Left colon (tissue), 2 donors: ENCODE measurements at regions of chr18 and their contacts with region 1.

Region 1: DNA sequence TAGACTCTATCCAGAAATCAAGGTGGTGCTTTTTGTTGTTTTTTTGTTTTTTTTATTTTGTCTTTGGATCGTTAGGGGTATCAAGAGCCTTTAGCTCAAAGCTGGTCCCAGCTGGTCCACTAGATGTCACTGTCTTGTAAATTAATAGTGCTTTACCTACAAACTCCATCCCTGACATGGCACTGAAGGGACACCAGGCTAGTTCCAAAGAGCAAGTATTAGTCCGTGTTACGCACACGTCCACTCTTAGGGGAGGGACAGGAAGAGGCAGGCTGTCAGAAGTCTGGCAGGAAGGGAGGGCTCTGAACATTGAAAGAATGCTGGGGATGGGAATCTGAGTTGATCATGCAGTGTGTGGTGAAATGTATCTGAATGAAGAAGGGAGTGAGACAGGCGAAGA is 85.9 kb upstream of the CCBE1 start:
- DNase-seq: no peak
- ATAC-seq: no peak

Region 2: DNA sequence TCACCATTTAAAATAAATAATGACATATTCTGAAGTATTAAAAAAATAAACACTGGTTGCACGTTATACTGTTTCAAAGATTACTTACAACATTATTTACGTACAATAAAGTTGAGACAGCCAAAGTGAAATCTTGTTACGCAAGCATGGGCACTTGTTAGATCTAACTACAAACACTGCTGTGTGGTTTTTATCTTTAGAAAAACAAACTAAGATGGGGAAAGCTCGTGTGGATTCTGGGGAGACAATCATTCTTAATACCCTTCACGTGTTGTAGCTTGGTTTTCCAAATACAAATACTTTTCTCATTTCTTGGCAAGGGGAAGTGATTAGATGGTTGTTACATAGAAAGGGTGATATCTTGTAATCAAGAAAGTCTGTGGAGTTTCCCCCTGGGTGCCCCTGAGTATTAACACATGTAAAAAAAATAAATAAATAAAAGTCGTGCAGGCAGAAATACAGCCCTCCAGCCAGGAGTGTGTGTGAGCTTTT is 298.3 kb before region 1 on chr18:
- intact Hi-C with region 1: no loop called
- DNase-seq: no peak
- ATAC-seq: no peak

Region 3: DNA sequence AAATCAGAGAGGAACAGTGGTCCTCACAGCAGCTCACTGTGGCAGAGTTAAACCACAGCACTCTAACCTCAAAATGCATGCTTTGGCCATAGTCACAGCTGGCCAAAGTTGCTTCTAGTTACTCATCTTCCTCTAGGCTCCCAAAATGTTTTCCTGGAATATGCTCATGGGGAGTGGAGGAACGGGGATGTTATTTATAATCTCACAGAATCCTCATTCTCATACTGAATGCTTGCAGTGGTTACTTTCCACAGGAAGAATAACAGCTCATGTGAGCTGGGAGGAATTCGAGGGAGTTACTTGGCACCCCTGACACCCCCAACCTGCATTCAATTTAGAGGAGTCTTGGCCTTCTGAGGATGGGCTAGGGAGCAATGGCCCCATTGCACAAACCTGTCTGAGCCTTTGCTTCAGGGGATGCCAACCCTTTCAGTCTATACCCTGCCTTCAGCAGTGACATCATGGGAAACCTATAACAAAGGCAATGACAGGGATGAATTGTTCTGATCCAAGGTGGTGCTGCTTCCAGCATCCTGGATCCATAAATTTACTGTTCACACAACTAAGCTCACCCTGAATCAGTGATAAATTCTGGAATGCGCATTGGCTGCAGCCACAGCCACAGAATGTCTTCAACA is 63.5 kb before region 1 on chr18:
- intact Hi-C with region 1: loop called in 1 of 2 experiments (anchors 10 kb)
- DNase-seq: no peak
- ATAC-seq: no peak